Mammary epithelial cell (primary cell): ENCODE measurements at regions of chr10 and their contacts with region 1.

Region 1: DNA sequence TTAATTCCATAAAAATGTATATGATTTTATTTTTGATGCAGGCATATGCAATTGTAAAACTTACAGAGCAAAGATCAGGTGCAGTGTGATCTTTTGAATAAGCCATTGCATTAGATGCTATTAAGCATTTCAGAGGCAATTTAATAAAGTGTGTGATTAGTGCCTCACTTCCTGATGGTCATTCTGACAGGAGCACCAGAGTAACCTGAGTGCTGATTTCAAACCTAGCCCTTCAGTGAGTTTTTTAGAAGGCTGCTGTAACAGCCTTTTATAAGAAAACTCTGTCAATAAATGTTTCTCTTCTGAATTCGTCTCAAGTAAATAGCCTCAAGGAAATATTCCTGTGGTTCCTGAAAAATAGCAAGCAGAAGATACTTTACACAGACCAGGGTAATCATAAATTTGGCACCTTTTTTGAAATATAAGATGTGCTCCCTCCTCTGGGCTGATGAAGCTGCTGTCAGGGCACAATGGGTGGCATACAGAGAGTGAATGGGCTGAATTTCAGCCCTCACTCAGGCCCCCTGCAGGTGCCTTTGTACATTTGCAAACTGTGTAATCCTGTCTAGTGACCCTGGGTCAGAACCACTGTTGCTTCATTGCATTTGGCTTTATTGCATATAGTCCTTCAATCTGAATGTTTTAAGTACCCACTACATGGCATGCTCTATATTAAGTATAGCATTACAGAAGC is 193.7 kb upstream of the CSTF2T start:
- DNase-seq: peak; percentile 32
- H3K4me3 ChIP-seq: no peak overlapping the region
- H3K27ac ChIP-seq: no peak overlapping the region
- H3K4me1 ChIP-seq: peaks cover 11% of the 10 kb centered on the region
- H3K27me3 ChIP-seq: no peaks in the 10 kb centered on the region
- CTCF ChIP-seq: peak; percentile 40

Region 2: DNA sequence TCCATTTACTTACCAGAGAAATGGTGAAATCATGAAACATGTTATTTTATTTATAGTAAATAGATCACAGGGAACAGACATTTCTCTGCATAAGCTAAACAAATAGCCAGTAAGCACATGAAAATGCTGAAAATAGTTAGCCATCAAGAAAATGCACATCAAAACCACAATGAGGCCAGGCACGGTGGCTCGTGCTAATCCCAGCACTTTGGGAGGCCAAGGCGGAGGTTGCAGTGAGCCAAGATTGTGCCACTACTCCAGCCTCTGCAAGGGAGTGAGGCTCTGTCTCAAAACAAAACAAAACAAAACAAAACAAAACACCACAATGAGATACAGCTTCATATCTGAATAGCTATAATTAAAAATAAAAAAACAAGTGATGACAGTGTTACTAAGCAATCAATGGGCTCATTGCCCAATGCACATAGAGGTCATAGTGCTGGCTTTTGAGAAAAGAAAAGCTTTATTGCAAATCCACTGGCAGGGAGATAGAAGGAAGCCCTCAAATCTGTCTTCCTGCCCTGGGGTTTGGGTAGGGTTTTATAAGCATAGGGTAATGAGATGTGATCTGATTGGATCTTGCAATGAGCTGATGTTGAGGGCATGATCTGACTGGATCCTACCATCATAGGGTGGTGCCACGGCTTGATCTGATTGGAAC is 210.0 kb before region 1 on chr10:
- CTCF ChIA-PET with region 1: no interaction called
- dilution Hi-C with region 1: loop called (anchors 10 kb)
- in situ Hi-C with region 1: no loop called
- intact Hi-C with region 1: no loop called
- DNase-seq: no peak
- H3K4me3 ChIP-seq: no peak overlapping the region
- H3K27ac ChIP-seq: no peak overlapping the region
- H3K4me1 ChIP-seq: no peaks in the 10 kb centered on the region
- H3K27me3 ChIP-seq: no peaks in the 10 kb centered on the region
- CTCF ChIP-seq: no peak

Region 3: GRCh38 chr10:51783941-51784340 is 109.2 kb before region 1 on chr10:
- CTCF ChIA-PET with region 1: no interaction called
- dilution Hi-C with region 1: no loop called
- in situ Hi-C with region 1: no loop called
- intact Hi-C with region 1: no loop called
- DNase-seq: no peak
- H3K4me3 ChIP-seq: no peak overlapping the region
- H3K27ac ChIP-seq: no peak overlapping the region
- H3K4me1 ChIP-seq: no peaks in the 10 kb centered on the region
- H3K27me3 ChIP-seq: no peaks in the 10 kb centered on the region
- CTCF ChIP-seq: no peak

Region 4: GRCh38 chr10:51838471-51838870 is 54.6 kb before region 1 on chr10:
- CTCF ChIA-PET with region 1: no interaction called
- dilution Hi-C with region 1: no loop called
- in situ Hi-C with region 1: no loop called
- intact Hi-C with region 1: no loop called
- DNase-seq: no peak
- H3K4me3 ChIP-seq: no peak overlapping the region
- H3K27ac ChIP-seq: no peak overlapping the region
- H3K4me1 ChIP-seq: peaks cover 3% of the 10 kb centered on the region
- H3K27me3 ChIP-seq: no peaks in the 10 kb centered on the region
- CTCF ChIP-seq: no peak